HepG2 (cell line): ENCODE measurements at regions of chr14 and their contacts with region 1.

Region 1: GRCh38 chr14:96424109-96424989 is 32.4 kb downstream of the AK7 start:
- DNase-seq: peak; percentile 71
- ATAC-seq: peak; percentile 93
- H3K4me3 ChIP-seq: peak overlapping the region; percentile 30 to 70 (median 57)
- H3K27ac ChIP-seq: no peak overlapping the region
- H3K4me1 ChIP-seq: peaks cover 6% of the 10 kb centered on the region
- H3K27me3 ChIP-seq: peaks cover 0 to 6% of the 10 kb centered on the region in 2 experiments; a peak in 2 of 5 replicates
- CTCF ChIP-seq: peak; percentile 83
- EP300 ChIP-seq: no peak
- POLR2A ChIP-seq: no peak
- RAD21 ChIP-seq: no peak; the same call in 1 of the 2 replicates

Region 2: GRCh38 chr14:96100161-96101029 is 324.0 kb before region 1 on chr14:
- CTCF ChIA-PET with region 1: interaction called, 13 read pairs
- POLR2A ChIA-PET with region 1: no interaction called
- in situ Hi-C with region 1: loop called (anchors 5 kb)
- intact Hi-C with region 1: loop called (anchors 1 kb)
- DNase-seq: peak; percentile 60
- ATAC-seq: peak; percentile 57
- H3K4me3 ChIP-seq: no peak overlapping the region
- H3K27ac ChIP-seq: no peak overlapping the region
- H3K4me1 ChIP-seq: peaks cover 46% of the 10 kb centered on the region
- H3K27me3 ChIP-seq: no peaks in the 10 kb centered on the region; a peak in 1 of 5 replicates
- CTCF ChIP-seq: peak; percentile 90
- EP300 ChIP-seq: no peak
- POLR2A ChIP-seq: no peak
- RAD21 ChIP-seq: peak; percentile 90

Region 3: GRCh38 chr14:96297000-96297399 is 127.3 kb before region 1 on chr14:
- CTCF ChIA-PET with region 1: interaction called, 44 read pairs
- POLR2A ChIA-PET with region 1: no interaction called
- in situ Hi-C with region 1: loop called (anchors 5 kb)
- intact Hi-C with region 1: loop called (anchors 1 kb)
- DNase-seq: peak; percentile 12
- ATAC-seq: no peak
- H3K4me3 ChIP-seq: no peak overlapping the region
- H3K27ac ChIP-seq: no peak overlapping the region
- H3K4me1 ChIP-seq: no peaks in the 10 kb centered on the region
- H3K27me3 ChIP-seq: no peaks in the 10 kb centered on the region
- CTCF ChIP-seq: peak; percentile 23; the same call in 1 of the 2 replicates
- EP300 ChIP-seq: no peak
- POLR2A ChIP-seq: no peak
- RAD21 ChIP-seq: no peak

Region 4: GRCh38 chr14:96309896-96310330 is 114.4 kb before region 1 on chr14:
- CTCF ChIA-PET with region 1: no interaction called
- POLR2A ChIA-PET with region 1: no interaction called
- in situ Hi-C with region 1: no loop called
- intact Hi-C with region 1: loop called (anchors 1 kb)
- DNase-seq: peak; percentile 7
- ATAC-seq: no peak
- H3K4me3 ChIP-seq: no peak overlapping the region
- H3K27ac ChIP-seq: no peak overlapping the region
- H3K4me1 ChIP-seq: peaks cover 24% of the 10 kb centered on the region
- H3K27me3 ChIP-seq: no peaks in the 10 kb centered on the region
- CTCF ChIP-seq: peak; percentile 33
- EP300 ChIP-seq: no peak
- POLR2A ChIP-seq: no peak
- RAD21 ChIP-seq: no peak